Activated CD4-positive, alpha-beta memory T cell treated with anti-CD3 and anti-CD28 coated beads for 36 hours (primary cell): ENCODE measurements at regions of chr1 and their contacts with region 1.

Region 1: GRCh38 chr1:169601093-169601881 is 15.0 kb upstream of the F5 start:
- DNase-seq: no peak
- H3K4me3 Mint-ChIP-seq: peak overlapping the region; percentile 7
- H3K27ac Mint-ChIP-seq: peak overlapping the region; percentile 48
- H3K4me1 Mint-ChIP-seq: peaks cover 51% of the 10 kb centered on the region
- H3K27me3 Mint-ChIP-seq: no peaks in the 10 kb centered on the region

Region 2: GRCh38 chr1:169546087-169546995 is 54.9 kb before region 1 on chr1:
- CTCF ChIA-PET with region 1: interaction called, 16 read pairs
- POLR2A ChIA-PET with region 1: no interaction called
- intact Hi-C with region 1: no loop called
- DNase-seq: peak; percentile 49
- H3K4me3 Mint-ChIP-seq: no peak overlapping the region
- H3K27ac Mint-ChIP-seq: no peak overlapping the region
- H3K4me1 Mint-ChIP-seq: no peaks in the 10 kb centered on the region
- H3K27me3 Mint-ChIP-seq: no peaks in the 10 kb centered on the region

Region 3: DNA sequence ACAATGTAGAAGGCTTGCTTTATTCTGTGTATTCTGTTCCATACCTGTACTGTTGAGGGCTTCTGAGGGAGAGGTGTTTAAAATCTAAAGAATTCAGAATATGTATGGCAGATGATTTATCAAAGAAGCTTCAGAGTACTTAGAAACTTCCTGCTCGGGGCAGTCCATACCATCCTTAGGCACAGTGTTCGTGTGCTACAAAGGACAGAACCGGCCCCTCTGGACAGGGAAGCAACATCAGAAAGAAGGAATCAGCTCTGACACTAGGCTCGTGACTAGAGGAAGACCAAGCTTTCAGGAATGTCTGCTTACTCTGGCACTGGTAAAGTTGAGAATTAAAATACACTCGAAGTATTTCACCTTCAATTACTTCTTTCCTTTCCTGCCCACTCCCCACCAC is 14.5 kb after region 1 on chr1:
- CTCF ChIA-PET with region 1: interaction called, 28 read pairs
- POLR2A ChIA-PET with region 1: interaction called, 3 read pairs
- intact Hi-C with region 1: no loop called
- DNase-seq: no peak
- H3K4me3 Mint-ChIP-seq: no peak overlapping the region
- H3K27ac Mint-ChIP-seq: no peak overlapping the region
- H3K4me1 Mint-ChIP-seq: peaks cover 8% of the 10 kb centered on the region
- H3K27me3 Mint-ChIP-seq: no peaks in the 10 kb centered on the region

Region 4: GRCh38 chr1:169634145-169634544 is 32.9 kb after region 1 on chr1:
- CTCF ChIA-PET with region 1: interaction called, 10 read pairs
- POLR2A ChIA-PET with region 1: no interaction called
- intact Hi-C with region 1: no loop called
- DNase-seq: no peak
- H3K4me3 Mint-ChIP-seq: no peak overlapping the region
- H3K27ac Mint-ChIP-seq: no peak overlapping the region
- H3K4me1 Mint-ChIP-seq: peaks cover 11% of the 10 kb centered on the region
- H3K27me3 Mint-ChIP-seq: no peaks in the 10 kb centered on the region

Region 5: DNA sequence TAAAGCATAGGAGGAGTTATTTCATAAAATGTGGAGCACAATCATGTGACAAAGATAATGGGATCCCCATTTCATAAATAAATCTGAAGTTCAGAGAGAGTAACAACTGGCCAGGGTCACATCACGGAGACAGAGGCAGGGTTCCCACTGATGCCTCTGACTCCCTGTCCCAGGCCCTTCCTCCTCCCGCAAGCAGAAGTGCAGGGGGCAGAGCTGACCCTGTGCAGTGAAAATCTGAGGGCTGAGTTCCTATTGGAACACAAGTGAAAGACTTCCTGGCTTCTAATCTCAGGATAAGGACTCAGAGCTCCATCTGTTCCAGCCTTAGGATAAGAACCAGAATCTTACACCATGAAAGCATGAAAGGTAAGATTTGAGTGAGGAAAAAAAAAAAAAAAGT is 88.1 kb after region 1 on chr1:
- CTCF ChIA-PET with region 1: interaction called, 75 read pairs
- POLR2A ChIA-PET with region 1: interaction called, 9 read pairs
- intact Hi-C with region 1: loop called (anchors 1 kb)
- DNase-seq: no peak
- H3K4me3 Mint-ChIP-seq: no peak overlapping the region
- H3K27ac Mint-ChIP-seq: peak overlapping the region; percentile 66
- H3K4me1 Mint-ChIP-seq: peaks cover 59% of the 10 kb centered on the region
- H3K27me3 Mint-ChIP-seq: no peaks in the 10 kb centered on the region

Region 6: GRCh38 chr1:169809370-169810095 is 208.2 kb after region 1 on chr1:
- CTCF ChIA-PET with region 1: interaction called, 36 read pairs
- POLR2A ChIA-PET with region 1: no interaction called
- intact Hi-C with region 1: no loop called
- DNase-seq: no peak
- H3K4me3 Mint-ChIP-seq: no peak overlapping the region
- H3K27ac Mint-ChIP-seq: no peak overlapping the region
- H3K4me1 Mint-ChIP-seq: no peaks in the 10 kb centered on the region
- H3K27me3 Mint-ChIP-seq: no peaks in the 10 kb centered on the region

Region 7: GRCh38 chr1:169893494-169894362 is 292.4 kb after region 1 on chr1 and contains the start of gene SCYL3:
- CTCF ChIA-PET with region 1: no interaction called
- POLR2A ChIA-PET with region 1: no interaction called
- intact Hi-C with region 1: no loop called
- DNase-seq: peak; percentile 92
- H3K4me3 Mint-ChIP-seq: peak within 1 kb of the TSS; percentile 82
- H3K27ac Mint-ChIP-seq: peak within 1 kb of the TSS; percentile 98
- H3K4me1 Mint-ChIP-seq: peaks cover 38% of the 10 kb centered on the region
- H3K27me3 Mint-ChIP-seq: no peaks in the 10 kb centered on the region
- total RNA-seq, gene SCYL3: 11.1 to 12.4 TPM